MCF 10A (cell line): ENCODE measurements at regions of chr2 and their contacts with region 1.

Region 1: DNA sequence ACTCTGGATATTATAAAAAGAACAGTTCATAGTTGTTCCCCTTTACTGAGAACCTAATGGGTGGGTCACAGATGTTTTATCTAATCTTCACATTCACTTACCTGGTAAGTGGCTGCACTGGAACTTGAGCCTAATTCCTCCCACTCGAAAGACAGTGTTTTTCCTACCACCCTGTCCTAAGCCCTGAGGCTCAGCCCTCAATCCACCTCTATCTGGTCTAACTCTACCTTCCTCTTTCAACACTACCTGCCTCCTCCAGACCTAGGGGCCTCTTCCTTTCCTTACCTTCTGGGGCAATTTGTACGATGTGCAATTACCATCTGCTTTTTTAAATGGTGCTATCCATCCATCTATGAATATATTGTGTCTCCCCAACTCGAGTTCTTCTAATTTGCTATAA is 9.7 kb upstream of the KIF3C start:
- DNase-seq: no peak
- H3K4me3 Mint-ChIP-seq: no peak overlapping the region
- H3K27ac Mint-ChIP-seq: no peak overlapping the region
- H3K4me1 Mint-ChIP-seq: peaks cover 11% of the 10 kb centered on the region
- H3K27me3 Mint-ChIP-seq: no peaks in the 10 kb centered on the region
- CTCF ChIP-seq: no peak

Region 2: GRCh38 chr2:25926984-25927756 is 64.8 kb before region 1 on chr2:
- CTCF ChIA-PET with region 1: no interaction called
- POLR2A ChIA-PET with region 1: no interaction called
- intact Hi-C with region 1: no loop called
- DNase-seq: no peak
- H3K4me3 Mint-ChIP-seq: no peak overlapping the region
- H3K27ac Mint-ChIP-seq: no peak overlapping the region
- H3K4me1 Mint-ChIP-seq: no peaks in the 10 kb centered on the region
- H3K27me3 Mint-ChIP-seq: no peaks in the 10 kb centered on the region
- CTCF ChIP-seq: no peak

Region 3: DNA sequence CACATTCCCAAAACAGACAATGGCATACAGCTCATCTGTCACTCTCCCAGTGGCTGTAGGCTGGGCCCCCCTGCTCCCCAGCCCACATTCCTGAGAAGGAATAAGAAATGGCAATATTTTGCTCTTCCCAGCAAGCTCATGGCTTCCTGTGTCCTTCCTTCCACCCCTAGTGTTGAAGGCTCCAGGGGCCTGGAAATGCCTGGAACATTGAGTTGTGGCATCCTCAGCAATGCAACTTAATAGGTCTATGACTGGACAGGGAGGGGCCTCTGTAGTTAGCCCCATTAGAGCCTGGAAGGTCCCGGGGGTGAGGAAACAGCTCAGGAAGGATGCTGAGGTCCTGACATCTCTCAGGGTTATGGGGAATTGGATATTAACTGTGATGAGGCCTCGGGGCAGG is 13.0 kb before region 1 on chr2:
- CTCF ChIA-PET with region 1: interaction called, 4 read pairs
- POLR2A ChIA-PET with region 1: interaction called, 10 read pairs
- intact Hi-C with region 1: no loop called
- DNase-seq: no peak
- H3K4me3 Mint-ChIP-seq: no peak overlapping the region
- H3K27ac Mint-ChIP-seq: no peak overlapping the region
- H3K4me1 Mint-ChIP-seq: peaks cover 21% of the 10 kb centered on the region
- H3K27me3 Mint-ChIP-seq: no peaks in the 10 kb centered on the region
- CTCF ChIP-seq: no peak

Region 4: DNA sequence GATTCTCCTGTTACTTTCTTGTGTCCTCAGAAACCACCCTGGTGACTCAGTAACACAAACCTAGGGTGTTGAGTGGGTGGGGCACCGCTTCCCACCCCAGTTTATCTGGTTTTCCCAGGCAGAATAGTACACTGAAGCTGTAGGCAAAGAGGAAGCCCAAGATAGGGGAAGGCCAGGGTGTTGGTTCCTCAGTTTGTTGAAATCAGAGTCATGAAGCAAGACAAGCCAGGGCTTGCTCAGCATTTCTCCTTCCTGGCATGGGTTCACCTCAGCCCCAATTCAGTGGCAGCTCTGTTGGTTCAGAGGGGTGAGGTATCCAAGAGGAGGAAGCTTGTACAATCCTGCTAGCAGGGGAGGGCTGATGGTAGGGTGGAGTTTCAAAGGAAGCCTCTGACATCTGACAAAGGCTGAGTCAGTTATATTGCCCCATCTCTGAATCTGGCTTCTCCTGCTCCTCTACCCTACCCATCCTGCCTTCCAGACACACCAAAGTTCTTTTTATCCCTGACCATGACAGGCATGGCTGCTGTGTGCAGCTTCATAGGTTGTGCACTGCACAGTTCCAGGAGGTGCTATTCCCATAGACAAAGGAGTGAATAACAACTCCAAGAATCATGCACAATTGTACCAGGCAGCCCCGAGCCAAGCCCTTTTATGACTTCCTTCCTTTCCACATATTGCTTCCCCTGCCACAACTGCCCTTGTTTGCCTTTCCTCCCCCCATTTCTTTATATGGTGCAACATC is 17.0 kb after region 1 on chr2:
- CTCF ChIA-PET with region 1: interaction called, 5 read pairs
- POLR2A ChIA-PET with region 1: interaction called, 15 read pairs
- intact Hi-C with region 1: no loop called
- DNase-seq: peak; percentile 99
- H3K4me3 Mint-ChIP-seq: peak overlapping the region; percentile 29
- H3K27ac Mint-ChIP-seq: peak overlapping the region; percentile 91
- H3K4me1 Mint-ChIP-seq: peaks cover 35% of the 10 kb centered on the region
- H3K27me3 Mint-ChIP-seq: no peaks in the 10 kb centered on the region
- CTCF ChIP-seq: no peak

Region 5: GRCh38 chr2:26018176-26018716 is 26.3 kb after region 1 on chr2:
- CTCF ChIA-PET with region 1: interaction called, 4 read pairs
- POLR2A ChIA-PET with region 1: interaction called, 17 read pairs
- intact Hi-C with region 1: no loop called
- DNase-seq: peak; percentile 93
- H3K4me3 Mint-ChIP-seq: no peak overlapping the region
- H3K27ac Mint-ChIP-seq: peak overlapping the region; percentile 56
- H3K4me1 Mint-ChIP-seq: peaks cover 22% of the 10 kb centered on the region
- H3K27me3 Mint-ChIP-seq: no peaks in the 10 kb centered on the region
- CTCF ChIP-seq: no peak

Region 6: GRCh38 chr2:26088032-26088643 is 96.2 kb after region 1 on chr2:
- CTCF ChIA-PET with region 1: interaction called, 4 read pairs
- POLR2A ChIA-PET with region 1: interaction called, 4 read pairs
- intact Hi-C with region 1: loop called (anchors 5 kb)
- DNase-seq: peak; percentile 39
- H3K4me3 Mint-ChIP-seq: no peak overlapping the region
- H3K27ac Mint-ChIP-seq: no peak overlapping the region
- H3K4me1 Mint-ChIP-seq: peaks cover 45% of the 10 kb centered on the region
- H3K27me3 Mint-ChIP-seq: no peaks in the 10 kb centered on the region
- CTCF ChIP-seq: peak; percentile 45

Region 7: GRCh38 chr2:26144953-26145680 is 153.2 kb after region 1 on chr2:
- CTCF ChIA-PET with region 1: interaction called, 40 read pairs
- POLR2A ChIA-PET with region 1: interaction called, 16 read pairs
- intact Hi-C with region 1: loop called (anchors 1 kb)
- DNase-seq: peak; percentile 74
- H3K4me3 Mint-ChIP-seq: no peak overlapping the region
- H3K27ac Mint-ChIP-seq: peak overlapping the region; percentile 72
- H3K4me1 Mint-ChIP-seq: peaks cover 6% of the 10 kb centered on the region
- H3K27me3 Mint-ChIP-seq: peaks cover 6% of the 10 kb centered on the region
- CTCF ChIP-seq: peak; percentile 84